K562 (cell line): ENCODE measurements at regions of chr22 and their contacts with region 1.

Region 1: DNA sequence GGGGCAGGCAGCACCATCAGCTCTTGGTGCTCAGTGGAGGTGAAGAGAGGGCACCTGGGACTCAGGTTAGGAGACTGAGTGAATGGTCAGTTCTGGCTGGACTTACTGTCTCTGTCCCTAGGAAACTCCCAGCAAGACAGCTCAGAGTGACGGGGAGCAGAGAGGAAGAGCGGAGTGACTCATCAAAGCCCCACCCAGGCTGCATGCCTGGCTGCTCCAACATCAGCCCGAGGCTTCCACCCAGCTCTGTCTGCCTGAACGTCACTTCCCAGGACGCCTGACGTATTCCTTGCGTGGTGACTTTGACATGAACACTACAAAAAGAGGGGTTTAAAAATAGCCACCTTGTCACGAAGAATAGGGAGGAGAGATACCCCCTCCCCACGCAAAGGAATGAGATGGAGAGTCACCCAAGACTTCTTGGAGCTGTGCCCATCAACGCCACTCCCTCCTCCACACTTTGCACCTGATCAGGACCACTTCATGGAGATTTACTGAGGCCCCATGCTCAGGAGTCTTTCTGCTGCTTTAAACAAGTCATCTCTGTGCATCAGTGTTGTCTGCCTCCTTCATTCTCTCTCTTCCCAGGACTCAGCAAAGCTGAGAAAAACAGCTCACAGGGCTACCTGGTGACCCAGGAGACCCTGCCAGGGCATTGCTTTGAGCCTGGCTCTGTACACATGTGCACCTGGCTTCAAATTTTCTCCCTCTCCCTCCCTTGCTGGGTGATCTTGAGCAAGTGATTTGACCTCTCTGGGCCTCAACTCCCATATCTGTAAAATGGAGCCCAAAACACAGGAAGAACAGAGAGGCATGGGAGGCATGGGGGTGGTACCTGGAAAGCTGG is 83.1 kb downstream of the MN1 start:
- DNase-seq: peak; percentile 80 to 90 (median 85)
- ATAC-seq: peak; percentile 97
- H3K4me3 ChIP-seq: no peak overlapping the region
- H3K27ac ChIP-seq: peak overlapping the region; percentile 75
- H3K4me1 ChIP-seq: peaks cover 23 to 26% of the 10 kb centered on the region in 2 experiments; a peak in 4 of 5 replicates
- H3K27me3 ChIP-seq: no peaks in the 10 kb centered on the region
- CTCF ChIP-seq: no peak
- EP300 ChIP-seq: no peak
- POLR2A ChIP-seq: no peak; the same call in 1 of the 2 replicates
- RAD21 ChIP-seq: no peak

Region 2: GRCh38 chr22:27668828-27669797 is 49.3 kb before region 1 on chr22:
- CTCF ChIA-PET with region 1: no interaction called
- POLR2A ChIA-PET with region 1: no interaction called
- in situ Hi-C with region 1: no loop called
- intact Hi-C with region 1: loop called (anchors 5 kb)
- DNase-seq: peak; percentile 78 to 88 (median 82)
- ATAC-seq: peak; percentile 93
- H3K4me3 ChIP-seq: no peak overlapping the region
- H3K27ac ChIP-seq: peak overlapping the region; percentile 89
- H3K4me1 ChIP-seq: peaks cover 30 to 41% of the 10 kb centered on the region in 2 experiments
- H3K27me3 ChIP-seq: no peaks in the 10 kb centered on the region
- CTCF ChIP-seq: no peak
- EP300 ChIP-seq: peak; percentile 45
- POLR2A ChIP-seq: no peak; the same call in 1 of the 2 replicates
- RAD21 ChIP-seq: no peak